ENCODE measurements at regions of chr12 and their contacts with region 1.

Region 1: DNA sequence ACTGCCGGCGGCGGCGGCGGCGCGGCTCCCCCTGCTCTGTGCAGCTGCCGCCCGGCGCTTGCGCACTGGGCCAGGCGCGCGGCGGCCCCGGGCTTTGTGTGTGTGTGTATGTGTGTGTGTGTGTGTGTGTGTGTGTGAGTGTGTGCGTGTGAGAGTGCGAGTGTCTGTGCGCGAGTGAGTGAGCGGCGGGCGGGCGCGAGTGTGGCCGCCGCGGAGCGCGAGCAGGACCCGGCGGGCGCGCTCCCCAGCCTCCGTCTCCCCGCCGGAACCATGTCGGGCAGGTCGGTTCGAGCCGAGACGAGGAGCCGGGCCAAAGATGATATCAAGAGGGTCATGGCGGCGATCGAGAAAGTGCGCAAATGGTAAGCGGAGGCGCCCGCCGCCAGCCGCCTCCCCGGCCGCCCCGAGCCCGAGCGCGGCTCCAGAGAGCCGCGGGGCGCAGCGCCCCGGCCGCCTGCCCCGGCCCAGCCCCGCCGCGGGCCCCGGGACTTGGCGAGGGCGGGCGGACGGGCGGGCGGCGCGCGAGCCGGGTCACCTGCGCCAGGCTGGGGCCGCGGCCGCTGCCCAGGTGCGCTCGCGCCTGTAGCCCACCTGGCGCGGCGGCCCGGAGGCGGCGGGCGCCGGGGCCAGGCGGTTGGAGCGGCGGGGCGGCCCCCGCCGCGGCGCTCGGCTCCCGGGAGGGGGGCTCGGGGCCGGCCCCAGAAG is at the start of gene BCL7A:
- DNase-seq: peak; percentile 76
- ATAC-seq: peak; percentile 56
- H3K4me3 ChIP-seq: peak within 1 kb of the TSS; percentile 93
- H3K27ac ChIP-seq: peak within 1 kb of the TSS; percentile 91
- H3K4me1 ChIP-seq: peaks cover 21% of the 10 kb centered on the region
- H3K27me3 ChIP-seq: no peaks in the 10 kb centered on the region
- CTCF ChIP-seq: no peak
- total RNA-seq, gene BCL7A: 31.6 and 32.5 TPM in 2 replicates

Region 2: GRCh38 chr12:121376754-121377697 is 644.9 kb before region 1 on chr12:
- CTCF ChIA-PET with region 1: no interaction called
- POLR2A ChIA-PET with region 1: no interaction called
- intact Hi-C with region 1: no loop called
- DNase-seq: no peak
- ATAC-seq: no peak
- H3K4me3 ChIP-seq: no peak overlapping the region
- H3K27ac ChIP-seq: no peak overlapping the region
- H3K4me1 ChIP-seq: no peaks in the 10 kb centered on the region
- H3K27me3 ChIP-seq: no peaks in the 10 kb centered on the region
- CTCF ChIP-seq: no peak

Region 3: GRCh38 chr12:121917979-121918678 is 103.8 kb before region 1 on chr12 and contains the start of gene CFAP251:
- CTCF ChIA-PET with region 1: no interaction called
- POLR2A ChIA-PET with region 1: no interaction called
- intact Hi-C with region 1: loop called (anchors 2 kb)
- DNase-seq: peak; percentile 30
- ATAC-seq: no peak
- H3K4me3 ChIP-seq: no peak within 1 kb of the TSS
- H3K27ac ChIP-seq: no peak within 1 kb of the TSS
- H3K4me1 ChIP-seq: no peaks in the 10 kb centered on the region
- H3K27me3 ChIP-seq: no peaks in the 10 kb centered on the region
- CTCF ChIP-seq: no peak
- total RNA-seq, gene CFAP251: 3.2 and 11.5 TPM in 2 replicates

Region 4: GRCh38 chr12:121955258-121956235 is 66.4 kb before region 1 on chr12:
- CTCF ChIA-PET with region 1: interaction called, 8 read pairs
- POLR2A ChIA-PET with region 1: no interaction called
- intact Hi-C with region 1: loop called (anchors 1 kb)
- DNase-seq: peak; percentile 67
- ATAC-seq: peak; percentile 52
- H3K4me3 ChIP-seq: no peak overlapping the region
- H3K27ac ChIP-seq: no peak overlapping the region
- H3K4me1 ChIP-seq: peaks cover 6% of the 10 kb centered on the region; the same call in 1 of the 2 replicates
- H3K27me3 ChIP-seq: no peaks in the 10 kb centered on the region
- CTCF ChIP-seq: peak; percentile 91

Region 5: DNA sequence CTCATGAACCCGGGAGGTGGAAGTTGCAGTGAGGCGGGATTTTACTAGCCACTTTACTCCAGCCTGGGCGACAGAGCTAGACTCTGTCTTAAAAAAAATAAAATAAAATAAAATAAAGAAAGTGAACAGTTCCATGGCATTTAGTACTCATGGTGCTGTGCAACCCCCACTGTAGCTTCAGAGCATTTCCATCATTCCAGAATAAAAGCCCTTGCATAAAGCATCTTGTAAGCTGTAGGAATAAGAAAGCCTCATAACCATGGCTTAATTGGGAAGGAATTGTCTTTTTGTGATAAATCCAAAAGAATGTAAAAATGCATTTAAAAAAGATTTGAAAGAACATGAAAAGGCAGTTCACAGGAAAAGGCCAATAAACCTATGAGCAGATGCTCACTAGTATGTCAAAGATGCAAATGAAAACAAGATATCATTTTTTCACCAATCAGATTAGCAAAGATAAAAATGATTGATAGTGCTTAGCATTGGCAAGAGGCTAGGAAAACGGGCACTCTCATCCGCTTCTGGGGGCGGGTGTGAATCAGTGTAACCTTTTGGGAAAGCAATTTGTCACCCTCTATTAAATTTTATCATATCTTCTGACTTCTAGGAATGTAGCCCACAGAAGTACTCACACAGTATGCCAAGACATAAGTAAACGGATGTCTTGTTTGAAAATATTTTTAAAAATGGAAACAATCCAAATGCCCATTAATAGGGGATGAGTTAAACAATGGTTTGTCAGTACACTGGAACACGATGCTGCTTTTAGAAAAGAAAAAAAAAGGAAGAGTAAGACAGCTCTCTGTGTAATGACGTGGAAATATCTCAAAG is 56.9 kb before region 1 on chr12:
- CTCF ChIA-PET with region 1: no interaction called
- POLR2A ChIA-PET with region 1: no interaction called
- intact Hi-C with region 1: loop called (anchors 1 kb)
- DNase-seq: peak; percentile 99
- ATAC-seq: peak; percentile 91
- H3K4me3 ChIP-seq: no peak overlapping the region
- H3K27ac ChIP-seq: peak overlapping the region; percentile 89
- H3K4me1 ChIP-seq: peaks cover 19% of the 10 kb centered on the region
- H3K27me3 ChIP-seq: no peaks in the 10 kb centered on the region
- CTCF ChIP-seq: no peak

Region 6: DNA sequence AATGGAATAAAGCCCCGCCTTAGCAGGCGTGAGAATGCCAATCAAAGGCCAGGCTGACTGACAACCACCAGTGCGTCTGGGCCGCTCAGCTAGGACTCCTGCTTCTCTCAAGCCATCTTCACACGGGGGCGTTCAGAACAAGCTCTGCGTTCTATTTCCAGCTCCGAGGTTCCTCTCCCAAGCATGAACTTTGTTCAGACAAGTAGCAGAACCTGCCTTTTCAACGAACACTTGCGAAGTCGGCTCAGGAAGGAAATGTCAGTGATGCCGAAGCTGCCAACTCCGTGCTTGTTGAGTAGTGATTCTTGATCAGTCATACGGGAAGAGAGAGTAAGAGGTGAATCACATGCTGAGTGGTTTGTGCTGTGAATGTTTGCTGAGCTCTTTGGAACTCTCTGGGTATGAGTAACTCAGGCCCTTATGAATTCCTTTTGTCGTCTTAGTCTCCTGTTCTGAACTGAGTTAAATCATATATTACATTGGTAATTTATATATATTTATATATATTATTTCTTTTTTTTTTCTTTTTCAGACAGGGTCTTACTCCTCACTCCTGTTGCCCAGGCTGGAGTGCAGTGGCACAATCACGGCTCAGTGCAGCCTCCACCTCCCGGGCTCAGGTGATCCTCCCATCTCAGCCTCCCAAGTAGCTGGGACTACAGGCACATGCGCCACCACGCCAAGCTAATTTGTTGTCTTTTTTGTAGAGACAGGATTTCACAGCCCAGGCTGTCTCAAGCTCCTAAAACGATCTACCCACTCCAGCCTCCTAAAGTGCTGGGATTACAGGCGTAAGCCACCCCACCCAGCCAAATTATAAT is 29.7 kb before region 1 on chr12:
- CTCF ChIA-PET with region 1: interaction called, 4 read pairs
- POLR2A ChIA-PET with region 1: interaction called, 12 read pairs
- intact Hi-C with region 1: loop called (anchors 1 kb)
- DNase-seq: peak; percentile 99
- ATAC-seq: peak; percentile 90
- H3K4me3 ChIP-seq: peak overlapping the region; percentile 37
- H3K27ac ChIP-seq: peak overlapping the region; percentile 96
- H3K4me1 ChIP-seq: peaks cover 33% of the 10 kb centered on the region
- H3K27me3 ChIP-seq: no peaks in the 10 kb centered on the region
- CTCF ChIP-seq: 0 out of 2 replicates have a peak, but pooled peaks have one; percentile 10